ENCODE measurements at regions of chr1 and their contacts with region 1.

Region 1: GRCh38 chr1:98963064-98963787 is 41.4 kb downstream of the PLPPR5 start:
- DNase-seq: no peak
- ATAC-seq: no peak
- H3K4me3 ChIP-seq: no peak overlapping the region
- H3K27ac ChIP-seq: no peak overlapping the region
- H3K4me1 ChIP-seq: no peaks in the 10 kb centered on the region
- H3K27me3 ChIP-seq: peaks cover 0 to 13% (median 0%) of the 10 kb centered on the region in 7 donors
- CTCF ChIP-seq: no peak

Region 2: GRCh38 chr1:98919211-98919610 is 44.0 kb before region 1 on chr1:
- intact Hi-C with region 1: loop called in 1 of 10 experiments (anchors 10 kb)
- DNase-seq: no peak
- ATAC-seq: no peak
- H3K4me3 ChIP-seq: no peak overlapping the region
- H3K27ac ChIP-seq: no peak overlapping the region
- H3K4me1 ChIP-seq: no peaks in the 10 kb centered on the region
- H3K27me3 ChIP-seq: no peaks in the 10 kb centered on the region
- CTCF ChIP-seq: no peak

Region 3: GRCh38 chr1:99252630-99253029 is 289.4 kb after region 1 on chr1:
- intact Hi-C with region 1: no loop called
- DNase-seq: no peak
- ATAC-seq: no peak
- H3K4me3 ChIP-seq: no peak overlapping the region
- H3K27ac ChIP-seq: no peak overlapping the region
- H3K4me1 ChIP-seq: no peaks in the 10 kb centered on the region
- H3K27me3 ChIP-seq: no peaks in the 10 kb centered on the region
- CTCF ChIP-seq: no peak